ENCODE measurements at regions of chr2 and their contacts with region 1.

Region 1: DNA sequence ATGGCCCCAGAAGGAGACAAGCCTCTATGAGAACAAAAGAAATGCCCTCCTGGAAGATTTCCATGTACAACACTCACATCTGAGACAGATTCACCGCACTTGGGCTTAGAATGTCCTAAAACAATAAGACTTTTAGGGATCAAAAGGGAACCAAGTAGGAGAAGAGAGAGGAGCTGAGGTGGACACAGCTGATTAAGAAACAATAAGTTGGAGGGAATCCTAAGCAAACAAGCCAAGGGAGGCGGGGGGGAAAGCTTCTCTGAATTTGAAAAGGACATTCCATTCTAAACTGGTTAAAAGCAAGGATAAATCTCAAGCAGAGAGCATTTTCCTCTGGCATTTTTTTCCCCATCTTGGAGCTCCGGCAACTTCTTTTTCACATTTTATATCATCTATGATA is 9.9 kb downstream of the ACVR1 start:
- DNase-seq: no peak
- H3K4me3 ChIP-seq: no peak overlapping the region
- H3K27ac ChIP-seq: no peak overlapping the region
- H3K4me1 ChIP-seq: peaks cover 4% of the 10 kb centered on the region
- H3K27me3 ChIP-seq: no peaks in the 10 kb centered on the region
- CTCF ChIP-seq: no peak

Region 2: GRCh38 chr2:157789933-157790511 is 76.2 kb before region 1 on chr2:
- CTCF ChIA-PET with region 1: no interaction called
- dilution Hi-C with region 1: loop called (anchors 5 kb)
- in situ Hi-C with region 1: loop called in 1 of 2 experiments (anchors 10 kb)
- intact Hi-C with region 1: no loop called
- DNase-seq: peak; percentile 23
- H3K4me3 ChIP-seq: no peak overlapping the region
- H3K27ac ChIP-seq: no peak overlapping the region
- H3K4me1 ChIP-seq: peaks cover 25% of the 10 kb centered on the region
- H3K27me3 ChIP-seq: no peaks in the 10 kb centered on the region
- CTCF ChIP-seq: no peak

Region 3: DNA sequence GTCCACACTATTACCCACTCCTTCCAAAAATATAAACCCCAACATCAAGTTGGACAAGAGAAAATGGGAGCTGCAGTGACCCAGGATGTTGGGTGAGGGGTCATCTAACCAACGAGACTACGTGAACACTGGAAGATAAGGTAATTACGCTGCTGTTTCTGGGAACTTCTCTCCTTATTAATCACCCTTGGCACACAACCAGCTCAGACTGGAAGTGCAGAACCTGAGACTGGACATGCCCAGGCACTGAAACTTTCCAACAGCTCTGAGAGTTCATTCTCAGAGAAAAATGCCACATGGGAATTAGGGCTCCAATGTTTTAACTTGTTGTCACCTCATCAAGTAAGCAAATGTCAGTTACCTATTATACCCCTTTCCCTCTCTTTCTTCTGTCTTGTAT is 455.1 kb after region 1 on chr2:
- CTCF ChIA-PET with region 1: no interaction called
- dilution Hi-C with region 1: no loop called
- in situ Hi-C with region 1: no loop called
- intact Hi-C with region 1: no loop called
- DNase-seq: peak; percentile 95
- H3K4me3 ChIP-seq: no peak overlapping the region
- H3K27ac ChIP-seq: peak overlapping the region; percentile 82
- H3K4me1 ChIP-seq: peaks cover 16% of the 10 kb centered on the region
- H3K27me3 ChIP-seq: no peaks in the 10 kb centered on the region
- CTCF ChIP-seq: no peak

Measured in mammary epithelial cell (primary cell).